Right ventricle myocardium inferior (tissue), 1 donor: ENCODE measurements at regions of chr1 and their contacts with region 1.

Region 1: GRCh38 chr1:211800925-211801607 is 29.5 kb downstream of the LPGAT1 start:
- DNase-seq: no peak
- ATAC-seq: no peak

Region 2: GRCh38 chr1:211654838-211655787 is 146.0 kb before region 1 on chr1:
- intact Hi-C with region 1: no loop called
- DNase-seq: peak; percentile 93
- ATAC-seq: peak; percentile 95

Region 3: DNA sequence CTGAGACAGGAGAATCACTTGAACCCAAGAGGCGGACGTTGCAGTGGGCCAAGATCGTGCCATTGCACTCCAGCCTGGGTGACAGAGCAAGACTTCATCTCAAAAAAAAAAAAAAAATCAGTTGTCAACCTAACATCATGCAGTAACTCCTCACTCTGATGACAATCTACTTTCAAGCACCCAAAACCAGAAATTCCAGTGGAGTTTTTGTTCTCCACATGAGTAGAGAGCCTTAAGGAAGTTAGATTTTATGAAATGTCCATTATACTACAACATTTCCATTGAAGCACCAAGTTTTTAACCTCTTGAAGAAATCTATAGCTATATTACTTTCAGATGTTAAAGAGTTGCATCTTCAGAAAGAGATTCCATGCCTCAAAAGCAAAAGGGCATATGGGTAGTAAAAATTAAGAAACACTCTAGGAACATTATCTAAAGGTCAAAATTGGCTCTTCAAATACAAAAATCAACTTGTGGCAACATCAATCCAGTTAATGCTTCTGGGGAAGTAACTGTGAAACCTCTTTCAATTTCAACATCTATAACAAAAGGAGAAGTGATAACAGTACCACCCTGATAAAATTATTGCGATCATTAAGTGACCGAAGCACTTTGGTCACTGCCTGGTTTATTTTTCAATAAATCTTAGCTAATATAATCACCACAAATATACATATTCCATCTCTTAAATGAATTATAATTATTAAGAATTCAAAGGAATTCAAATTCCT is 21.8 kb after region 1 on chr1:
- intact Hi-C with region 1: loop called (anchors 2 kb)
- DNase-seq: no peak
- ATAC-seq: no peak